Activated CD8-positive, alpha-beta T cell treated with anti-CD3 and anti-CD28 coated beads for 36 hours (primary cell): ENCODE measurements at regions of chr19 and their contacts with region 1.

Region 1: DNA sequence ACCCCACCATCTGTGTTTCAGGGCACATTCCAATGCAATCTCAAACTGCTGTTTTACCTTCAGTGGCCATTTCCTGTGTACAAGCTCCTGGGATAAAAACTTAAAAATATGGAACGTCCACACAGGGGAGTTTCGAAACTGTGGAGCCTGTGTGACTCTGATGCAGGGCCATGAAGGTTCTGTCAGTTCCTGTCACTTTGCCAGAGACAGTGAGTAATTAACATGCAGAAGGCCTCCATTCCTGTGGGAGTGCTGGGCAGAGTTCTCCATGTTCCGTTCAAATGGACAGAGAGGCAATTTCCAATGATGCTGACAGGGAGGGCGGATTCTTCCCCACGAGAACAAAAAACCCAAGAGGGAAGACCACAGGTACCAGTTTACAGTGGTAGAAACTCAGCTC is 24.4 kb downstream of the WDR88 start:
- DNase-seq: no peak
- ATAC-seq: no peak
- H3K4me3 Mint-ChIP-seq: no peak overlapping the region
- H3K27ac Mint-ChIP-seq: no peak overlapping the region
- H3K4me1 Mint-ChIP-seq: peaks cover 25% of the 10 kb centered on the region
- H3K27me3 Mint-ChIP-seq: no peaks in the 10 kb centered on the region
- CTCF ChIP-seq: no peak

Region 2: DNA sequence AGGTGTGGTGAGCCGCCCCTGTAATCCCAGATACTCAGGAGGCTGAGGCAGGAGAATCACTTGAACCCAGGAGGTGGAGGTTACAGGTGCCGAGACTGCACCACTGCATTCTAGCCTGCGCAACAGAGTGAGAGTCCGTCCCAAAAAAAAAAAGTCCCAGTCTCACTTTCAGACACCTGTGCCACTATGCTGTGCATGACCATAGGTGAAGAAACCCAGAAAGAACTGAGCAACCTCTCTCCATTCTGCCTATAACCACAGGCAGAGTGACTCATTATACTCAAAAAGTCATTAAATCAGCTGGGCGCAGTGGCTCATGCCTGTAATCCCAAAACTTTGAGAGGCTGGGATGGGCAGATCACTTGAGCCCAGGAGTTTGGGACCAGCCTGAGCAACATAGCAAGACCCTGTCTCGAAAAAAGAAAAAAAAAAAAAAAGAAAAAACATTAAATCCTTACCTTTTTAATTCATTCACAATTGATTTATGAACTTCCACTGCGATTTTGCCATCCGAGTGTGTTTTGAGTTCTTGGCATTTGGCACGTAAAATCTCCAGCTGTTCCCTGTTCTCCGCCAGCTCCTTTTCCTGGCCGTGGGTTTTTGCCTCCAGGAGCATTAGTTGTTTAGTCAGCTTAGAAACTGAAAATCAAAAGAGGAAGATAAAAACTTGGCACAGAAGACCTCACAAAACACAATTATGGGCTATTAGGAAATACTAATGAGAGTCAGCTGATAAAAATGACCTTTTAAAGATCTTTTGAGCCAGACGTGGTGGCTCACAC is 241.3 kb before region 1 on chr19:
- CTCF ChIA-PET with region 1: no interaction called
- POLR2A ChIA-PET with region 1: no interaction called
- intact Hi-C with region 1: no loop called
- DNase-seq: no peak
- ATAC-seq: no peak
- H3K4me3 Mint-ChIP-seq: no peak overlapping the region
- H3K27ac Mint-ChIP-seq: no peak overlapping the region
- H3K4me1 Mint-ChIP-seq: no peaks in the 10 kb centered on the region
- H3K27me3 Mint-ChIP-seq: no peaks in the 10 kb centered on the region
- CTCF ChIP-seq: no peak

Region 3: GRCh38 chr19:33132425-33132824 is 23.9 kb before region 1 on chr19:
- CTCF ChIA-PET with region 1: no interaction called
- POLR2A ChIA-PET with region 1: no interaction called
- intact Hi-C with region 1: no loop called
- DNase-seq: no peak
- ATAC-seq: no peak
- H3K4me3 Mint-ChIP-seq: no peak overlapping the region
- H3K27ac Mint-ChIP-seq: peak overlapping the region; percentile 77
- H3K4me1 Mint-ChIP-seq: peaks cover 18% of the 10 kb centered on the region
- H3K27me3 Mint-ChIP-seq: no peaks in the 10 kb centered on the region
- CTCF ChIP-seq: no peak

Region 4: DNA sequence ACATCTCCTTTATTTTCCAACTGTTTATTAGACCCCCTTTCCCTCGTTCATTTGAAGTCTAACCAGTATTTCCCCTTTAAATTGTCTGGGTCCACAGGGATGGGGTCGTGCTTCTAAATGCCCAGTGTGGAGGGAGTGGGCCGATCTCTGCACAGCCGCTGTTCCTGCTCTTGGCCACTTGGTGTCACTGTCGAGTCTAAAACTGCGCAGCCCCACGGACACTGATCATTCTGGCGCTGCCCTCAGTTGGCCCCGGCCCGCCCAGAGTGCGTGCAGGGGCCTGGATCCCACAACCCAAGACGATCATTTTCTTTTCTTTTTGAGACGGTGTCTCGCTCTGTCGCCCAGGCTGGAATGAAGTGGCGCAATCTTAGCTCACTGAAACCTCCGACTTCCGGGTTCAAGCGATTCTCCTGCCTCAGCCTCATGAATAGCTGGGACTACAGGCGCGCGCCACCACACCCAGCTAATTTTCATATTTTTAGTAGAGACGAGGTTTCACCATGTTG is 12.4 kb before region 1 on chr19:
- CTCF ChIA-PET with region 1: interaction called, 20 read pairs
- POLR2A ChIA-PET with region 1: interaction called, 3 read pairs
- intact Hi-C with region 1: no loop called
- DNase-seq: peak; percentile 76
- ATAC-seq: peak; percentile 100
- H3K4me3 Mint-ChIP-seq: no peak overlapping the region
- H3K27ac Mint-ChIP-seq: no peak overlapping the region
- H3K4me1 Mint-ChIP-seq: peaks cover 4% of the 10 kb centered on the region
- H3K27me3 Mint-ChIP-seq: peaks cover 3% of the 10 kb centered on the region
- CTCF ChIP-seq: peak; percentile 93

Region 5: DNA sequence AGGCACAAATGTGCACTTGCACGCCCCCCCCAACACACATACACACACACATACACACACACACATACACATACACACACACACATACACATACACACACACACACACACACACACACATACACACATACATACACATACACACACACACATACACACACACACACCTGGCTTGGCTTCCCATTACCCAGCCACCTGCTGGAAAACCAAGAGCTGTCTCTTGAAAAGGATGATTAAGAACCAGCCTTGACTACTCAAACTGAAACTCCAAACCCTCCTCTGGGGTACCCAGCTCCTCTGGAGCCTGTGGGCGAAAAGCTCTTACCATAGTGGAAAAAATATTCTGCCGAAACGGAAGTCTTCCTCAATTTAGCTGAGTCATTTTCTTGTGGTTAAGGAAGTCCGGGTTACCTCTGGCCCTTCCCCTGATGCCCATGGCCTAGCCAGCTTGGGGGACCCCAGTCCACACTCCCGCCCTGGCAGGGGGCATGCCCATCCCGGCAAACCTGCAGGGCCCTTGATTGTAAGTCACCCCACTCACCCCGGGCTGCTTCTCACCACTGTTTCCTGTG is 124.1 kb after region 1 on chr19:
- CTCF ChIA-PET with region 1: no interaction called
- POLR2A ChIA-PET with region 1: no interaction called
- intact Hi-C with region 1: no loop called
- DNase-seq: peak; percentile 74
- ATAC-seq: peak; percentile 93
- H3K4me3 Mint-ChIP-seq: peak overlapping the region; percentile 5
- H3K27ac Mint-ChIP-seq: peak overlapping the region; percentile 54
- H3K4me1 Mint-ChIP-seq: peaks cover 11% of the 10 kb centered on the region
- H3K27me3 Mint-ChIP-seq: no peaks in the 10 kb centered on the region
- CTCF ChIP-seq: no peak